Endothelial cell of umbilical vein (primary cell): ENCODE measurements at regions of chr6 and their contacts with region 1.

Region 1: DNA sequence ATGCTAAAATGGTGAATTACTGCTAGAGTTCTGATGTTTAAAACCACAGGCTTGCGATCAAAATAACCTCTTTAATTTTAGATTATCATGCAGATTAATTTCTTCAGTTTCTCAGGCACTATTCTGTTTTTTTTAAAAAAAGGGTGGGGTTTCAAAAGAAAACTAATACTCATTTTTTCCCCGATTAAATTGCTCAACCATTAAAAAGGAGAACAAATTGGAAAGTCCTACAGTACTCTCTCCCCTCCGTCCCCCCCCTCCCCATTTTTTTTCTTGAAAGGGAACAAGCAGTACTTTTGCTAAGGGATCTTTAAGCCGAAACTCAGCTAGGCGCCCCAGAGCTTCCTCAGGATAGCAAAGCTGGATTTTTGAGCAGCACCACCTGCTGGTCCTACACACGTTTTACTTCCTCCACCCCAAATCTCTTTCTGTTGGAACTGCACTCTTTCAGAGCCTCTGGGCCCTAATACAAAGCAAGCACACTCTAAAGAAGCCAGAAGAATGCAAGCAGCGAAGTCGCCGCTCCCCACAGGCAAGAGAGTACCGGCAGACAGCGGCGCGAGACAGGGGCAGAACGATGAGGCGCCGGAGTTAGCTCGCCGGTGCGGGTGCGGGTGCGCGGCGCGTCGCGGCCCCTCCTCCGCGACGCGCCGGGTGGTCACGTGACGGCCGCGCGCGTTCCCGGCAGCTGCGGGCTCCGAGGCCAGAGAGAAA is at the start of gene RNF146:
- DNase-seq: peak; percentile 90
- H3K4me3 ChIP-seq: peak within 1 kb of the TSS; percentile 92 to 99 (median 98)
- H3K27ac ChIP-seq: peak within 1 kb of the TSS; percentile 74
- H3K4me1 ChIP-seq: peaks cover 20% of the 10 kb centered on the region
- H3K27me3 ChIP-seq: no peaks in the 10 kb centered on the region
- CTCF ChIP-seq: peak; percentile 67 to 73
- POLR2A ChIP-seq: no peak
- total RNA-seq, gene RNF146: 43.8 and 48.1 TPM in 2 replicates

Region 2: GRCh38 chr6:126033696-126034095 is 1232.6 kb before region 1 on chr6:
- CTCF ChIA-PET with region 1: interaction called, 3 read pairs
- POLR2A ChIA-PET with region 1: no interaction called
- dilution Hi-C with region 1: no loop called
- intact Hi-C with region 1: loop called (anchors 5 kb)
- DNase-seq: peak; percentile 78
- H3K4me3 ChIP-seq: no peak overlapping the region
- H3K27ac ChIP-seq: no peak overlapping the region
- H3K4me1 ChIP-seq: no peaks in the 10 kb centered on the region
- H3K27me3 ChIP-seq: no peaks in the 10 kb centered on the region
- CTCF ChIP-seq: peak; percentile 56 to 65
- POLR2A ChIP-seq: no peak

Region 3: DNA sequence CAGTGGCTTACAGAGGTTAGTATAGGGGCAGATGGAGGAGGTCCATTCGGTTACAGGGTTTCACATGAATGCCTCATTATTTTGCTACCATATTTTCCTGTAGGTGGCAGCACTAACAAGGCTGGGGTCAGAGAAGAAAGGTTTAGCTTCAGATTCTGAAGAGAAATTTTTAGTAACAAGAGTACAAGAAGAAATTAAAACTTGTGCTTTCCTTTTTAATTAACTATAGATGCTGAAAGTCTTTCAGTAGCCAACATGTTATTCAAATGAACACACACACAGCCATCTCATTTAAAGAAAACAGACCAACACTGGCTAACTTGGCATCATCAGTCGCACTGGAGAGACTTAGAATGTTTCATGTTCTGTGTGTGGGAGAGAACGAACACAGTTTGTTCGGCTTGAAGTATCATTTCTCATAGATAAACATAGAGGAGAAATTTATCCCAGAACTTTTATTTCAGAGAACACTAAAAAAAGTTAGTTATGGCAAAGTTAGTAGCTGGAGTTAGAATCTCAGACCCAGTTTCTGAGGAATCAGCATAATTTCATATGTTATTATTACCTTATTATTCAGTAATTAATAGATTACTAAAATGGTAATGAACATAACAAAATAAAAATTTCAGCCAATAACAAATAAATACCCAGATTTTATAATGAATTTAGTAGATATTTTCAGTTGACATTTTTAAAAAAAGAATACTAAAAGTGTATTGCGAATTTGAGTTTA is 461.8 kb before region 1 on chr6:
- CTCF ChIA-PET with region 1: interaction called, 12 read pairs
- POLR2A ChIA-PET with region 1: no interaction called
- dilution Hi-C with region 1: no loop called
- intact Hi-C with region 1: loop called (anchors 2 kb)
- DNase-seq: peak; percentile 77
- H3K4me3 ChIP-seq: no peak overlapping the region
- H3K27ac ChIP-seq: no peak overlapping the region
- H3K4me1 ChIP-seq: peaks cover 9% of the 10 kb centered on the region
- H3K27me3 ChIP-seq: no peaks in the 10 kb centered on the region
- CTCF ChIP-seq: peak; percentile 63 to 66
- POLR2A ChIP-seq: no peak

Region 4: GRCh38 chr6:127201321-127201720 is 65.0 kb before region 1 on chr6:
- CTCF ChIA-PET with region 1: interaction called, 17 read pairs
- POLR2A ChIA-PET with region 1: interaction called, 4 read pairs
- dilution Hi-C with region 1: no loop called
- intact Hi-C with region 1: no loop called
- DNase-seq: peak; percentile 14
- H3K4me3 ChIP-seq: no peak overlapping the region
- H3K27ac ChIP-seq: no peak overlapping the region
- H3K4me1 ChIP-seq: no peaks in the 10 kb centered on the region
- H3K27me3 ChIP-seq: no peaks in the 10 kb centered on the region
- CTCF ChIP-seq: no peak
- POLR2A ChIP-seq: no peak

Region 5: DNA sequence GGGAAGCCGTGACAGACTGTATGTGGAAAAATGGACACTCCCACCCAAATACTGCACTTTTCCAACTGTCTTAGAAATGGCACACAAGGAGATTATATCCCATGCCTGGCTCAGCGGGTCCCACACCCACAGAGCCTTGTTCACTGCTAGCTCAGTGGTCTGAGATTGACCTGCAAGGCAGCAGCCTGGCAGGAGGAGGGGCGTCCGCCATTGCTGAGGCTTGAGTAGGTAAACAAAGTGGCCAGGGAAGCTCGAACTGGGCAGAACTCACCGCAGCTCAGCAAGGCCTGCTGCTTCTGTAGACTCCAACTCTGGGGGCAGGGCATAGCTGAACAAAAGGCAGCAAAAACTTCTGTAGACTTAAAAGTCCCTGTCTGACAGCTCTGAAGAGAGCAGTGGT is 11.0 kb before region 1 on chr6:
- CTCF ChIA-PET with region 1: interaction called, 19 read pairs
- POLR2A ChIA-PET with region 1: no interaction called
- dilution Hi-C with region 1: no loop called
- intact Hi-C with region 1: no loop called
- DNase-seq: no peak
- H3K4me3 ChIP-seq: no peak overlapping the region
- H3K27ac ChIP-seq: no peak overlapping the region
- H3K4me1 ChIP-seq: no peaks in the 10 kb centered on the region
- H3K27me3 ChIP-seq: no peaks in the 10 kb centered on the region
- CTCF ChIP-seq: no peak
- POLR2A ChIP-seq: no peak

Region 6: DNA sequence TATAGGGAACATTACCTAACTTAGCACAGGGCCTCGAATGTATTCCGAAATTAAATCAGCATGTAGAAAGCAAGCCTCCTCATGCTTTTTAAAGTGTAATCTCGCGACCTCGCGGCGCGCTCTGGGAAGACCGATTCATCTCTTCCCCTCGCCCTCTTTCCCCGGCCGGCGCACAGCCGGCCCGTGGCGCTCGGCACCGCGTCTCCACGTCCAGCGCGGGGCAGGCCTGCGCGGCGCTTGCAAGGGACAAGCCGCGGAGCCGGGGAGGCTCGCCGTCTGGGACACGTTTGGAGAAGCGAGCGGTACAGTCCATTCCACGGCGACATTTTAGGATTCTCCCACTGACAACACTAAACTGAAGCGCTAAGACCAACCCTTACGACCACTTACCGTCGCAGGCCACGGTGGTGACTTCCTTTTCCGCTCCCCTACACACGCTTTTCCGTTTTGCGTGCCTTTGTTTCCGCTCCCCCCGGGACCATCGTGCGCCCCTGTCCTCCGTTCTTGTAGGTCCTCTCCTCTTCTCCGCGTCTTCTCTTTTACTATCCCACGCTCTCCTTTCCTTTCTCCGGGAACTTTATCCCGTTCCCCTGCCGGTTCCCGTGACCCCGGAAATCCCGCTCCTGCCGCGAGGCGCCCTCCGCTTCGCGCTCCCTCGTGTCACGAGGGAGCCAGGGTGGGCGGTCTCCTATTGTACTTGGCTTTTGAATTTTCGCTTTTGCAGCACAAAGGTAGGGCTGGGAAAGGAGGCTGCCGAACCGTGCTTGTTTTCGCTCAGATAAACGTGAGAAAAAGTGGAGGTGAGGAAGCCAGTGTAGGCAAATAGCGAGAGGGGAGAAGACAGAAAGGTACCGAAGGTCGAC is 76.8 kb after region 1 on chr6 and contains the start of gene ECHDC1:
- CTCF ChIA-PET with region 1: interaction called, 11 read pairs
- POLR2A ChIA-PET with region 1: no interaction called
- dilution Hi-C with region 1: no loop called
- intact Hi-C with region 1: loop called (anchors 2 kb)
- DNase-seq: peak; percentile 79
- H3K4me3 ChIP-seq: peak within 1 kb of the TSS; percentile 48 to 94 (median 86)
- H3K27ac ChIP-seq: peak within 1 kb of the TSS; percentile 88
- H3K4me1 ChIP-seq: peaks cover 20% of the 10 kb centered on the region
- H3K27me3 ChIP-seq: no peaks in the 10 kb centered on the region
- CTCF ChIP-seq: no peak
- POLR2A ChIP-seq: peak; percentile 74
- total RNA-seq, gene ECHDC1: 36.7 and 36.8 TPM in 2 replicates